PC-9 (cell line): ENCODE measurements at regions of chr15 and their contacts with region 1.

Region 1: DNA sequence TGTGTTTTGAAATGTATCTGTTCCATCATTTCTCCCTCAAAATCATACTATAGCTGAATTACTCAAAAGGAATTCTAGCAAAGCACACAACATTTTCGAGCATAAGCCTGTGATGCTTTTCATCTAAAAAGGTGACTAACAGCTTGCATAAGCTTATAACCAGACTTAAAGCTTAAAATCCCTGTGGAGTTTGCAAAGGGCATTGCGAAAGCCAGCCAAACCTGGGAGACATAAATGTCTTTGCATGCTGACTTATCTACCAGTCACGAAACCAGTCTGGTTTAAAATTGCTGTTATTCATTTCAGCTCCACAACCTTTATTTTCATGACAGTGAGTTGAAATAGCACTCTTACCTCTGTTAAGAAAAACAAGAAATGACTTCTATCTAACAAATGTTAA is 35.6 kb upstream of the LIPC start:
- DNase-seq: peak; percentile 35 to 90
- H3K4me3 ChIP-seq: no peak overlapping the region
- H3K27ac ChIP-seq: peak overlapping the region; percentile 79
- H3K4me1 ChIP-seq: peaks cover 65% of the 10 kb centered on the region
- H3K27me3 ChIP-seq: no peaks in the 10 kb centered on the region
- CTCF ChIP-seq: no peak

Region 2: DNA sequence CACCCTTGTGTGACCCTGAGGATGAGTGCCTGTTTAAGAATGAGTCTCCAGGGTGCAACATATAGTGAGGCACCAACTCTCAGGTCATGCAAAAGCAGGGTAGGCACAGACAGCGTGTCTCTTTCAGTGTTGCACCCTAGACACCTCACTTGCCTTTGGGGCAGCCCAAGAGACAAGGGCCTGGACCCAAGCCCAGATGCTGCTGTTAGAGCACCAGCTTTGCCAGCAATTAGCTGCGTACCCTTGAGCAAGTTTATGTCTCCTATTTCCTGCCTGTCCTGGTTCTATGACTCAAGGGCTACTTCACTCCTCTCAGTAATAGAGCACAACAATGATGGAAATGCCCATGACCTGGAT is 135.3 kb before region 1 on chr15:
- CTCF ChIA-PET with region 1: no interaction called
- POLR2A ChIA-PET with region 1: interaction called, 5 read pairs
- intact Hi-C with region 1: loop called (anchors 1 kb)
- DNase-seq: peak; percentile 48 to 83
- H3K4me3 ChIP-seq: 0 out of 2 replicates have a peak overlapping the region, but pooled peaks have one; percentile 27
- H3K27ac ChIP-seq: peak overlapping the region; percentile 98
- H3K4me1 ChIP-seq: peaks cover 46% of the 10 kb centered on the region
- H3K27me3 ChIP-seq: no peaks in the 10 kb centered on the region
- CTCF ChIP-seq: no peak

Region 3: DNA sequence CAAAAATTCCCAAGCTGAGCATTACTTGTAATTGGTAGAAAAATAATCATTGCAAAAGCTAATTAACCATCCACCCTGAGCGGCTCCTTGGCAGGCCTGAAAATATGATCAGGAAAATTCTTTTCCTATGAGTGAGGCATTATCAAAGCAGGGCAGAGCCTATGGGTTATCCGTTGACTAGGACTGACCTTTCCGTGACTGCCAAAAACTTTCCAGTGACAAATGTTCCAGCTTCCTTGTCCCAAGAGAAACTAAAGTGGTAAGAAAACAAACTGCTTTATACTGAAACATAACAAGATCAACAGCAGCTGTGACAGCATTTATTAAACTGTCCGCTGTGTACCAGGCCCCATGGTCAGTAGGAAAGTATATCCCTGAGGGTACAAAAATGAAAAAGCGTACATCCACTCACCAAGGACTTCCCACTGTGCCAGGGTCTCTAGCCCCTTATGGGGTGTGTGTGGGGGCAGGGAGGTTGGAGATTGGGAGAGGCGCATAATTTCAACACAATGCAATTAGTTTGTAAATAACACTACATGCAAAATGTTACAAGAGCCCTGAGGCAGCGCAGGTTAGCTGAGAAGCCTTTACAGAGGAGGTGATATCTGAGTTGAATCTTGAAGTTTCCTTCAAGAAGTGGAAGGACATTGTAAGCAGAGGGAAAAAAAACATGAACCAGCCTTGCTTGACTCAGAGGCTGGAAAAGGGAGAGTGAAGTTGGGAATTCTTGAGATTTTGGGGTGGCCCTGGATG is 44.2 kb after region 1 on chr15:
- CTCF ChIA-PET with region 1: no interaction called
- POLR2A ChIA-PET with region 1: interaction called, 6 read pairs
- intact Hi-C with region 1: loop called (anchors 1 kb)
- DNase-seq: peak; percentile 43 to 94
- H3K4me3 ChIP-seq: peak overlapping the region; percentile 41; the same call in 1 of the 2 replicates
- H3K27ac ChIP-seq: peak overlapping the region; percentile 100
- H3K4me1 ChIP-seq: peaks cover 65% of the 10 kb centered on the region
- H3K27me3 ChIP-seq: no peaks in the 10 kb centered on the region
- CTCF ChIP-seq: no peak

Region 4: DNA sequence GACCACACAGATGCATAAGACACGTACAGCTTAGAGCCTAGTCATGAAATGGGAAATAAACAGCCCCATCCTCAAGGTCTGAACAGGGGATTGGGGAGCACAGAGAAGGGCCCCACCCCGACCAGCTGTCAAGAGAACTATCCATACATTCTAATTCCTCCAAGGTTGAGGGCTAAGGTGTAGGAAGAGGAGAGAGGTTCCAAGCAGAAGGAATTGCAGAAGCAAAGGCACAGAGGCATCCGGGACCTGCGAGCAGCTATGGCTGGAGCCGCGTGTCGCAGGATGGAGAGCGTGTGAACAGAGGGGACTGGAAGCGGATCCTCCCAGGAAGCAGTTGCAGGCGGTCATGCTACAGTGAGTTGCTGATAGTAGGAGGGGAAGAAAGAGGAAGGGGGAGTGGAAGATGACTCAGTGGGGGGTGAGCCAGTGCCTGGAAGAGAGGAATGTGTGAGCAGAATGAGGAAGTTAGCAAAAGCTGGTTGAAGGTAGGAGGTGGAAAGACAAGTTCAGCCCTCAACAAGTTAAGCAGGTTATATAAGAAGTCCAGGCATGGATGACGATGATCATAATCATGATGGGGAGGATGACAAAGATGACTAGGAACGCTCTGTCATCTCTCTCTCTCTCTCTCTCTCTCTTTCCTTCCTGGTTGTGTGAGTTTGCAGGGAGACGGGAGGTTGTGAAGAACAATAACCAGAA is 125.3 kb after region 1 on chr15:
- CTCF ChIA-PET with region 1: no interaction called
- POLR2A ChIA-PET with region 1: no interaction called
- intact Hi-C with region 1: loop called (anchors 1 kb)
- DNase-seq: peak; percentile 89 to 98
- H3K4me3 ChIP-seq: peak overlapping the region; percentile 49; the same call in 1 of the 2 replicates
- H3K27ac ChIP-seq: peak overlapping the region; percentile 97
- H3K4me1 ChIP-seq: peaks cover 50% of the 10 kb centered on the region
- H3K27me3 ChIP-seq: no peaks in the 10 kb centered on the region
- CTCF ChIP-seq: no peak

Region 5: GRCh38 chr15:58551764-58552504 is 155.8 kb after region 1 on chr15:
- CTCF ChIA-PET with region 1: no interaction called
- POLR2A ChIA-PET with region 1: no interaction called
- intact Hi-C with region 1: loop called (anchors 1 kb)
- DNase-seq: peak; percentile 59 to 92
- H3K4me3 ChIP-seq: peak overlapping the region; percentile 44; the same call in 1 of the 2 replicates
- H3K27ac ChIP-seq: peak overlapping the region; percentile 97
- H3K4me1 ChIP-seq: peaks cover 55% of the 10 kb centered on the region
- H3K27me3 ChIP-seq: no peaks in the 10 kb centered on the region
- CTCF ChIP-seq: no peak

Region 6: DNA sequence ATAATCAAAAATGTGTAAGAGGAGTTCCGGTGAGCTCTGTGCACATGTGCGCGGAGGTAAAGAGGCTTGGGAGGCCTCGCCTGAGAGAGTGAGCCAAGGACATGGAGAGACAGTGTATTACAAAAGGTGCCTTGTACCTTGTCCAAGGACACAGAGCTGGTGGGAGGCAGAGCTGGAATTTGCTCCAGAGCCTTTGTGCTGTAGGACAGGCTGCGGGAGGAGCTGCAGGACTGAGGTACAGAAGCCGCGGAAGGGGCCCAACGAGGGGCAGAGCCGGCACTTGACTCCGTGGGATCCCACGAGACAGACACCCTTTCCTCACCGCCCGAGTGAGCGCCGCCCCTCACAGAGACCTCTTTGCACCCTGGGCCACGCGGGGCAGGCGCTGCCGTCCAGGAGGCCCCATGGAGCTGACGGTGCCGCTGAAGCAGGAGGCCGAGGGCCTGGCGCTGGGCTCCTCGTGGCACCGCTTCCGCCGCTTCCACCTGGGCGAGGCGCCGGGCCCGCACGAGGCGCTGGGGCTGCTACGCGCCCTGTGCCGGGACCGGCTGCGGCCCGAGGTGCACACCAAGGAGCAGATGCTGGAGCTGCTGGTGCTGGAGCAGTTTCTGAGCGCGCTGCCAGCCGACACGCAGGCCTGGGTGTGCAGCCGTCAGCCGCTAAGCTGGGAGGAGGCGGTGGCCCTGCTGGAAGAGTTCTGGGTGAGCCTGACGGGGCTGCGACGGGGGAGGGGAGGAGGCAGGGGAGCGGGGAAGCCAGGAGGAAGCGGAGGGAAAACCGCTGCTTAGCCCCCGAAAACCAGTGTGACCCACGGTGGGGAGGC is 468.6 kb after region 1 on chr15:
- CTCF ChIA-PET with region 1: no interaction called
- POLR2A ChIA-PET with region 1: no interaction called
- intact Hi-C with region 1: loop called (anchors 5 kb)
- DNase-seq: peak; percentile 47 to 54
- H3K4me3 ChIP-seq: peak overlapping the region; percentile 58
- H3K27ac ChIP-seq: peak overlapping the region; percentile 77
- H3K4me1 ChIP-seq: no peaks in the 10 kb centered on the region
- H3K27me3 ChIP-seq: no peaks in the 10 kb centered on the region
- CTCF ChIP-seq: no peak